Dendritic cell treated with granulocyte-macrophage colony-stimulating factor and Interleukin-4, amounts not matched to agents 40 ng/mL and 50 ng/mL, for 4 days (primary cell): ENCODE measurements at regions of chr17 and their contacts with region 1.

Region 1: GRCh38 chr17:82418001-82418986 is at the starts of genes HEXD and OGFOD3:
- H3K4me3 Mint-ChIP-seq: peak within 1 kb of the TSS; percentile 76
- H3K27ac Mint-ChIP-seq: peak within 1 kb of the TSS; percentile 72
- H3K4me1 Mint-ChIP-seq: peaks cover 24% of the 10 kb centered on the region
- H3K27me3 Mint-ChIP-seq: no peaks in the 10 kb centered on the region

Region 2: DNA sequence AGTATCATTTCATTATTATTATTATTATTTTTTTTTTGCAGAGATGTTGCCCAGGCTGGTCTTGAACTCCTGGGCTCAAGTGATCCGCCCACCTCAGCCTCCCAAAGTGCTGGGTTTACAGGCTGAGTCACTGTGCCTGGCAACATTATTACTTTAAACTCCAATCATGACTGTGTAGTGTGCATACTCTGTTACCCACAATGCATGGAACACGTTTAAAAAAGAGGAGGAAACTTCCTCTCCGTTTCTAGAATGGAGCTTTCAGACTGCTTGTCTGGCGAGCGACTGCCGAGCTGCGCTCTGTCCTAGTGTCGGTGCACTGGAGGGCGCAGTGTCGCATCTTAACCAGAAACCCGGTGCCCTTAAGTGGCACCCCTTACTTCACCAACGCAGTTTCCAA is 298.1 kb before region 1 on chr17:
- intact Hi-C with region 1: no loop called
- H3K4me3 Mint-ChIP-seq: no peak overlapping the region
- H3K27ac Mint-ChIP-seq: no peak overlapping the region
- H3K4me1 Mint-ChIP-seq: peaks cover 26% of the 10 kb centered on the region
- H3K27me3 Mint-ChIP-seq: no peaks in the 10 kb centered on the region

Region 3: GRCh38 chr17:82351716-82352488 is 66.4 kb before region 1 on chr17:
- intact Hi-C with region 1: loop called (anchors 1 kb)
- H3K4me3 Mint-ChIP-seq: no peak overlapping the region
- H3K27ac Mint-ChIP-seq: no peak overlapping the region
- H3K4me1 Mint-ChIP-seq: peaks cover 10% of the 10 kb centered on the region
- H3K27me3 Mint-ChIP-seq: peaks cover 58% of the 10 kb centered on the region

Region 4: GRCh38 chr17:82402865-82403264 is 15.4 kb before region 1 on chr17:
- intact Hi-C with region 1: loop called (anchors 2 kb)
- H3K4me3 Mint-ChIP-seq: no peak overlapping the region
- H3K27ac Mint-ChIP-seq: no peak overlapping the region
- H3K4me1 Mint-ChIP-seq: peaks cover 41% of the 10 kb centered on the region
- H3K27me3 Mint-ChIP-seq: peaks cover 7% of the 10 kb centered on the region

Region 5: GRCh38 chr17:82450170-82451106 is 32.1 kb after region 1 on chr17 and contains the start of gene CYBC1:
- intact Hi-C with region 1: loop called (anchors 5 kb)
- H3K4me3 Mint-ChIP-seq: peak within 1 kb of the TSS; percentile 95
- H3K27ac Mint-ChIP-seq: peak within 1 kb of the TSS; percentile 94
- H3K4me1 Mint-ChIP-seq: peaks cover 43% of the 10 kb centered on the region
- H3K27me3 Mint-ChIP-seq: no peaks in the 10 kb centered on the region